ENCODE measurements at regions of chr22 and their contacts with region 1.

Region 1: DNA sequence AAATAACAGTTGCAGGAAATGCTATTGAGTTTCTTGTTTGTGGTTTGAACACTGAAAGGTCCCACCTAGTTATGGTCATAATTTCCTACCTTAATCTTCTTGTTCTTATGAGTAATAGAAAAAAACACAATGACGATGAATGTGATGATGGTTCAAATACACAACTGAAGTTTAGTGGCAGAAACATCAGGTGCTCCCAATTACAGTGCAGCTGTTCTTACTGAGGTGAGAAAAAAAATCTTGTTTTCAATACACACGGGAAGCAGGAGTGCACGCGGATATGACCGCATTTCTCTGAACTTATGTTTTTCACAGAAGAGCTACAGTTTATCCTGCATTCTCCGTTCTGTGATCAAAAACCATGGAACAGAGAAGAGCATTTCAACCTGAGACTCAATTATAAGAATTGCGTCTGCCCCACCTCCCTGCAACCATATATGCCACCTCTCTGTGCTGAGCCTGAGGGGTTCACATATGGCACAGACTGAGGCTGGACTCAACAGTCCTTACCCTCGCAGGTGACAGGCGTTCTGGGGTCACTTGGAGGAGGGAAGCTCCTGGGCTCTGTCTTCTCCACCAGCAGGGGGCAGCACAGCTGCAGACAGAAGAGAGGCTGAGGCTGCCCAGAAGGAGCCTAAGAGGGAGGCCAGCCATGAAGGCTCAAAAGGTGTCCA is 99.7 kb upstream of the IGLL5 start:
- DNase-seq: peak in 4 of 5 donors; percentile 36 to 76 (median 40)
- ATAC-seq: peak in 3 of 4 donors; percentile 50 to 60 (median 54)
- H3K4me3 ChIP-seq: no peak overlapping the region
- H3K27ac ChIP-seq: peak overlapping the region in 1 of 12 donors; percentile 71
- H3K4me1 ChIP-seq: peaks cover 0 to 8% (median 0%) of the 10 kb centered on the region in 12 donors
- H3K27me3 ChIP-seq: peaks cover 0 to 35% (median 6%) of the 10 kb centered on the region in 9 donors
- CTCF ChIP-seq: peak; percentile 45 to 79 (median 64)
- POLR2A ChIP-seq: no peak

Region 2: DNA sequence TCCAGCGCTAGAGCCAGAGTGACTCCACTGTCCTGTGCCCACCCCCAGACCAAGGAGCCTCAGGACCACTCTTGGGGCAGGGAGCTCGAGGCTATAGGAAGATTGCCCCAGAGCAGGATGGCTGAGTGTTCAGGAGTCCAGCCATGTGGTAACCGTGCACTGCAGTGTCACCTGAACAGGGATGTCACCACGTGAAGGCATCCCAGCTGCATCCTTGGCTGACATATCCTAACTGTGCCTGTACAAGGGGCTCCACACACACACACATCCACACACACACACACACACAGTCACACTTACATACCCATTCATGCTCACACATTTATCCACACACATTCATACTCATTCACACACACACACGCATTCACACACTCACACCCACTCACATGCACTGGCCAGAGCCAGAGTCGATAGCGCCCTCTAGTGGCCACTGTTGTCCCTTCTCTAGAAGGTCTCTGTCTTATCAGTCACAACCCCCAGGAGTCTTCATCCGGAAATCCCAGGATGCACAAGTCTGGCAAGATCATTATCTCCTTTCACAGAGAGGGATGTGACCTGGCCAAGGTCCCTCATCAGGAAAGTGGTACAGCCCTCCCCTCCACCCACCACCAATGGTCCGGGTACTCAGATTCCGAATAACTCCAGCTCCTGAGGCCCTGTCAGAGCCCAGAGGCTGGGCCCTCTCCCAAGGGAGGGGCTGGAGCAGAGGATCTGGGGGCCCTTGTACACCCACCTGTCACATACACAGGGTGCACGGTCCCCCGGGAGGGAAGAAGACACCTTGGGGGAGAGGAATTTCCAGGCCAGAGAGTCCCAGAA is 154.8 kb after region 1 on chr22:
- intact Hi-C with region 1: loop called in 1 of 10 experiments (anchors 10 kb)
- DNase-seq: peak; percentile 47 to 68 (median 54)
- ATAC-seq: peak in 3 of 4 donors; percentile 51 to 67 (median 54)
- H3K4me3 ChIP-seq: no peak overlapping the region
- H3K27ac ChIP-seq: no peak overlapping the region
- H3K4me1 ChIP-seq: peaks cover 0 to 5% (median 0%) of the 10 kb centered on the region in 12 donors
- H3K27me3 ChIP-seq: peaks cover 0 to 11% (median 0%) of the 10 kb centered on the region in 9 donors
- CTCF ChIP-seq: peak; percentile 52 to 72 (median 62)
- POLR2A ChIP-seq: no peak

Measured in heart left ventricle (tissue), 16 donors.